Caco-2 (cell line): ENCODE measurements at regions of chr14 and their contacts with region 1.

Region 1: DNA sequence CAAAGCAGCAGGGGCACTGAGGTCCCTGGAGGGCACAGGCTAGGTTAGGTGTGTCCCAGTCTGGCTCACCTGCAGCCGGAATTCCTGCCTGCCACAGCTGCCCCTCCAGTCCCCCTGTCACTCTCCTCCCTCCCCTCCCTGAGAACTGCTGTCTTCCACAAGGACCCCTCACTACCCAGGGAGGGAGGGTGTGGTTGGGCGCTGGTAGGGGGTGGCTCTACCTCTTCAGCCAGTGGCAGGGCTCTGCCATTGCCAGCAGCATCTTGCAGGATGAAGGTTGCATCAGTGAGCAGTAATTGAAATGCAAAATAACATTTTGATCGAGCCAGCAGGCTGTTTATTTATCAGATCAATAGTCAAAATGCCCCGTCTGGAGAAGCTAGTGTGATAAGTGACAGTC is 45.7 kb downstream of the ESRRB start:
- DNase-seq: no peak
- H3K4me3 ChIP-seq: no peak overlapping the region
- H3K4me3 Mint-ChIP-seq: no peak overlapping the region
- H3K27ac Mint-ChIP-seq: no peak overlapping the region
- H3K4me1 ChIP-seq: no peaks in the 10 kb centered on the region
- H3K4me1 Mint-ChIP-seq: no peaks in the 10 kb centered on the region
- H3K27me3 ChIP-seq: no peaks in the 10 kb centered on the region
- H3K27me3 Mint-ChIP-seq: peaks cover 9% of the 10 kb centered on the region
- CTCF ChIP-seq: no peak

Region 2: GRCh38 chr14:76337635-76338545 is 83.8 kb before region 1 on chr14:
- CTCF ChIA-PET with region 1: no interaction called
- POLR2A ChIA-PET with region 1: no interaction called
- intact Hi-C with region 1: no loop called
- DNase-seq: no peak
- H3K4me3 ChIP-seq: no peak overlapping the region
- H3K4me3 Mint-ChIP-seq: no peak overlapping the region
- H3K27ac Mint-ChIP-seq: no peak overlapping the region
- H3K4me1 ChIP-seq: no peaks in the 10 kb centered on the region
- H3K4me1 Mint-ChIP-seq: no peaks in the 10 kb centered on the region
- H3K27me3 ChIP-seq: no peaks in the 10 kb centered on the region
- H3K27me3 Mint-ChIP-seq: peaks cover 19% of the 10 kb centered on the region
- CTCF ChIP-seq: no peak

Region 3: GRCh38 chr14:76432827-76433752 is 11.4 kb after region 1 on chr14:
- CTCF ChIA-PET with region 1: no interaction called
- POLR2A ChIA-PET with region 1: no interaction called
- intact Hi-C with region 1: no loop called
- DNase-seq: no peak
- H3K4me3 ChIP-seq: no peak overlapping the region
- H3K4me3 Mint-ChIP-seq: no peak overlapping the region
- H3K27ac Mint-ChIP-seq: no peak overlapping the region
- H3K4me1 ChIP-seq: 0 out of 2 replicates have a peak, but pooled peaks cover 3% of the 10 kb centered on the region
- H3K4me1 Mint-ChIP-seq: no peaks in the 10 kb centered on the region
- H3K27me3 ChIP-seq: no peaks in the 10 kb centered on the region; the same call in 1 of the 2 replicates
- H3K27me3 Mint-ChIP-seq: peaks cover 2% of the 10 kb centered on the region
- CTCF ChIP-seq: no peak

Region 4: GRCh38 chr14:76456891-76457586 is 35.4 kb after region 1 on chr14:
- CTCF ChIA-PET with region 1: no interaction called
- POLR2A ChIA-PET with region 1: no interaction called
- intact Hi-C with region 1: loop called (anchors 1 kb)
- DNase-seq: no peak
- H3K4me3 ChIP-seq: no peak overlapping the region
- H3K4me3 Mint-ChIP-seq: no peak overlapping the region
- H3K27ac Mint-ChIP-seq: no peak overlapping the region
- H3K4me1 ChIP-seq: no peaks in the 10 kb centered on the region
- H3K4me1 Mint-ChIP-seq: no peaks in the 10 kb centered on the region
- H3K27me3 ChIP-seq: no peaks in the 10 kb centered on the region
- H3K27me3 Mint-ChIP-seq: peaks cover 13% of the 10 kb centered on the region
- CTCF ChIP-seq: no peak

Region 5: DNA sequence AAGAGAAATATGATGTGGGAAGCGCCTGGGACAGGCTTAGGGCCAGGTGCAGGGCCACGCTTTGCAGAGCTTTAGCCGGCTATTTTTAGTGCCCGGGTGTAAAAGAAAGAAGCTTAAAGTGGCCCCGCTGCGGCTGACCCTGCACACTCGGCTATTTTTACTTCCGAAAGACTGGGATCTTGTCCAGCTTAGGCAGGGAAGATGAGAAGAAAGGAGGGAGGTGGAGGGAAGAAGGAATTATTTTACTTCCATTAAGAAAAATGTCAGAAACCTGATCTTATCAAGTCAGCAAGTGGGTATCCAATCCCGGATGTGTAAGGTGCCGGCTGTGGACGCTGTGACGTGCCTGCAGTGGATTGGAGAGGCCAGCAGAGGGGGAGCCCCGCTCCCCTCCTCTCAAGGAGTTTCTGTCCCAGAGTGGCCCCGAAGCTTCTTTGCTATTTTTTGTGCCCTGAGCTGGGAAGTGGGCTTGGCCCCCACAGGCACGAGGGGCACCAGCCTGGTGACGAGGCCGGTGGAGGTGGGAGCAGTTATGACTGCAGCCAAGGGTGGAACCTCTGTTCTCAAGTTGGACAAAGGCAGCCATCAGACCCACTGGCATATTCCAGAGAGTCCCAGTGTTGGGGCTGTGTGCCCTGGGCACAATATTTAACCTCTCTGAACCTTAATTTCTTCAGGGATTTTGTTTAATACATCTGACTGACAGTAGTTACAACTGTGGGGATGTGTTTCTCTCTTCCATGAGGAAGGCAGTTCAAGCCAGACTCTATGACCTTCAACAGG is 52.0 kb after region 1 on chr14:
- CTCF ChIA-PET with region 1: no interaction called
- POLR2A ChIA-PET with region 1: no interaction called
- intact Hi-C with region 1: no loop called
- DNase-seq: no peak
- H3K4me3 ChIP-seq: no peak overlapping the region
- H3K4me3 Mint-ChIP-seq: no peak overlapping the region
- H3K27ac Mint-ChIP-seq: no peak overlapping the region
- H3K4me1 ChIP-seq: no peaks in the 10 kb centered on the region
- H3K4me1 Mint-ChIP-seq: no peaks in the 10 kb centered on the region
- H3K27me3 ChIP-seq: no peaks in the 10 kb centered on the region
- H3K27me3 Mint-ChIP-seq: peaks cover 17% of the 10 kb centered on the region
- CTCF ChIP-seq: peak in 1 of 2 experiments; percentile 30

Region 6: GRCh38 chr14:76844223-76844622 is 422.6 kb after region 1 on chr14:
- CTCF ChIA-PET with region 1: no interaction called
- POLR2A ChIA-PET with region 1: no interaction called
- intact Hi-C with region 1: no loop called
- DNase-seq: no peak
- H3K4me3 ChIP-seq: no peak overlapping the region
- H3K4me3 Mint-ChIP-seq: no peak overlapping the region
- H3K27ac Mint-ChIP-seq: no peak overlapping the region
- H3K4me1 ChIP-seq: 0 out of 2 replicates have a peak, but pooled peaks cover 3% of the 10 kb centered on the region
- H3K4me1 Mint-ChIP-seq: peaks cover 8% of the 10 kb centered on the region
- H3K27me3 ChIP-seq: no peaks in the 10 kb centered on the region; the same call in 1 of the 2 replicates
- H3K27me3 Mint-ChIP-seq: peaks cover 7% of the 10 kb centered on the region
- CTCF ChIP-seq: no peak